ENCODE measurements at regions of chr11 and their contacts with region 1.

Region 1: GRCh38 chr11:126062679-126063506 is at the start of gene CDON:
- DNase-seq: peak; percentile 90
- H3K4me3 Mint-ChIP-seq: peak within 1 kb of the TSS; percentile 81
- H3K27ac Mint-ChIP-seq: peak within 1 kb of the TSS; percentile 97
- H3K4me1 Mint-ChIP-seq: peaks cover 13% of the 10 kb centered on the region
- H3K27me3 Mint-ChIP-seq: peaks cover 46% of the 10 kb centered on the region
- total RNA-seq, gene CDON: 3.2 and 3.5 TPM in 2 replicates

Region 2: GRCh38 chr11:125902927-125903710 is 159.8 kb before region 1 on chr11 and contains the start of gene PUS3:
- intact Hi-C with region 1: loop called (anchors 1 kb)
- DNase-seq: peak; percentile 84
- H3K4me3 Mint-ChIP-seq: peak within 1 kb of the TSS; percentile 94
- H3K27ac Mint-ChIP-seq: peak within 1 kb of the TSS; percentile 92
- H3K4me1 Mint-ChIP-seq: peaks cover 29% of the 10 kb centered on the region
- H3K27me3 Mint-ChIP-seq: peaks cover 31% of the 10 kb centered on the region
- total RNA-seq, gene PUS3: 16.0 and 17.0 TPM in 2 replicates

Region 3: DNA sequence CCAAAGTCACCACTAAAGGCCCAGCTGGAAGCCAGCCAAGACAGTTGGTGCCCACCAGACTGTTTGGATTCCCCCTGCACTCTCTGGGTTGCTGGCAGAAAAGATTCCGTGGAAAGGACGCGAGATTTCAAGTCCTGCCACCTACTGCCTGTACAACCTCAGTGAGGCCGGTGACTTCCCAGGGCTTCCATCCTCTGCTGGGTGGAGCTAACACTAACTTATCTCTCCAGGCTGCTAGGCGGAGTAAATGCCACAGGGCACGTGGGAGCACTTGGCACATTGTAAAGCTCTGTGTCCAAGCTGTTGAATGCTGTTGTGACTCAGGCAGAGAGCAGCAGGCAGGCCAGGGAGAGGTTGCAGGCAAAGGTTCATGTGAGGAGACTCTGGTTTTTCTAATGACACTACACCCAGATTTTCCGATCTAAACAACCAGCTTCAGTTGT is 50.6 kb after region 1 on chr11:
- intact Hi-C with region 1: loop called (anchors 5 kb)
- DNase-seq: no peak
- H3K4me3 Mint-ChIP-seq: no peak overlapping the region
- H3K27ac Mint-ChIP-seq: no peak overlapping the region
- H3K4me1 Mint-ChIP-seq: peaks cover 6% of the 10 kb centered on the region
- H3K27me3 Mint-ChIP-seq: no peaks in the 10 kb centered on the region